Posterior vena cava (tissue), 2 donors: ENCODE measurements at regions of chr6 and their contacts with region 1.

Region 1: GRCh38 chr6:33967966-33968724 is 164.3 kb upstream of the MLN start:
- DNase-seq: peak; percentile 5

Region 2: GRCh38 chr6:33809594-33809993 is 158.6 kb before region 1 on chr6:
- intact Hi-C with region 1: loop called in 1 of 2 experiments (anchors 10 kb)
- DNase-seq: no peak

Region 3: GRCh38 chr6:33896391-33897183 is 71.6 kb before region 1 on chr6:
- intact Hi-C with region 1: no loop called
- DNase-seq: no peak

Region 4: DNA sequence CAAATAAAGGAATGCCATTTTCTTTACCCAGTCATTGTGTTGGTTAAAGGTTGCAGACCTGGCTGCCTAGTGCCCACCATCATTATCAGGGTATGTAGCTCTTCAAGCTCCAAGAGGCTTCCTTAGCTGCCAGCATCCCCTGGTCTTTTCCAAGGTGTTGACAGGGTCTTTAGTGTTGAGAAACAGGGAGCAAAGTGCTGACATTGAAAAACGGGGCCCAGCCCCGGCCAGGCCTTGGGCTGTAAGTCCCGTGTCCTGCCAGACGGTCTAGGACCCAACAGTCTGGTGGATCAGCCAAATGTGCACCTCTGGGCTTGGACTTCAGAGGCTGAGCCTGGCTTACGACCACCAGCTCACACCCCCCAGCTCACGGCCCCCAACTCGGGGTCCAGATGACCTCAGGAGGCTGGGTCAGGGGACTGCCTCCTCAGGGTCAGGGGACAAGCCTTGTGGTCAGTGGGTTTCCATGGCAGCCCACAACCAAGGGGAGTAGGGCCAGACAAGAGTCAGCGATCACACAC is 49.9 kb before region 1 on chr6:
- intact Hi-C with region 1: loop called in 1 of 2 experiments (anchors 1 kb)
- DNase-seq: no peak